ENCODE measurements at regions of chr6 and their contacts with region 1.

Region 1: DNA sequence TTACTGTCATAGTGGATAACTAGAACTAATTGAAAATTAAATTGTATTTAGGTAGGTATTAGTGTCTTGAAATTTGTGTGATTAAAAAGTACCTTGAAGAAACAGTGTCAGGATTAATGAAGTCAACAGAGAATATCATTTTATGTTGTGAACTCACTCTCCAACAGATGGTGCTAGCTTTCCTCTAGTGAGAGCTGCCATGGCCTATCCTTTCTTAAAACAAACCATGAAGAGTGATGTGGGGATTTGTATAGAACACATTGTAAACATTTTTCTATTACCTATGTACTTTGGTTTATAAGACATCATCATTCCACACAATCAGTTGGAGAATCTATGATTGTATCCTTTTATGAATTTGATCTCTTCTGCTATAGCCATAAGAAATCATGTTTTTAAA is 4.8 kb upstream of the SRSF12 start:
- DNase-seq: no peak
- H3K4me3 ChIP-seq: no peak overlapping the region
- H3K27ac ChIP-seq: no peak overlapping the region
- H3K4me1 ChIP-seq: peaks cover 0 to 12% (median 0%) of the 10 kb centered on the region in 3 donors
- H3K27me3 ChIP-seq: peaks cover 0 to 3% (median 0%) of the 10 kb centered on the region in 4 donors
- CTCF ChIP-seq: peak in 5 of 6 experiments; percentile 24 to 55 (median 26)
- POLR2A ChIP-seq: no peak

Region 2: DNA sequence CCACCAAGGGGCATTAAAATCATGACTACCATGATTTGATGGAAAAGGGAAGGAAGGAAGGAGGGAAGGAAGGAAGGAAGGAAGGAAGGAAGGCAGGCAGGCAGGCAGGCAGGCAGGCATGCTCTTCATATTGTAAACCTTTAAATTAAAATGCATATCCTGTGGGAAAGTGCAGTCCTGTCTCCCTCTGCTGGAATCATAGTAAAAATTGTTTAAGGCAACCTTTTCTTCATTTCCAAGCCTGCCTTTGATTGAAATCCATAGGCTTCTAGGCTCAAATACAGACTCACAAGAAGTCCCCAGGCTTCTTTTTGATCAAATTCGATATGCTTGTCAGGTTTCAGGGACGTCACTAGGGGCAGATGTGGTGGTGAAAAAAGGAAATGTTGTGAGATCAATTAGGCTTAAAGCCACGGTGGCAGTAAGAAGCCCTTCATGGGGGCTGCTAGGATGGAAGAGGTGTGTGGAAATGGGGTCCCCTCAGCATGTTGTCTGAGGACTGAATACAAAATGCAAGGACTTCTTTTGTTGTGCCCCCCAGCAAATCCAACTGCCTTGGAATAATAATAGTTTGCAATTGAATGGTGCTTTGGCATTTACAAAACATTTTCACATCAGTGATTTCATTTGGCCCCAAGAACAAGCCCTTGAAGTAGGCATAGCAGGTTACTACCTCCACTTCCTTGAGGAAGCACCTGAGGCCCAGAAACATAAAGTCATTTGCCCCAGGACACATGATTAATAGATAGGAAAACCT is 120.1 kb after region 1 on chr6:
- intact Hi-C with region 1: loop called (anchors 10 kb)
- DNase-seq: no peak
- H3K4me3 ChIP-seq: no peak overlapping the region
- H3K27ac ChIP-seq: no peak overlapping the region
- H3K4me1 ChIP-seq: peaks cover 0 to 9% (median 0%) of the 10 kb centered on the region in 3 donors
- H3K27me3 ChIP-seq: no peaks in the 10 kb centered on the region
- CTCF ChIP-seq: peak in 5 of 6 experiments; percentile 39 to 69 (median 53)
- POLR2A ChIP-seq: no peak

Region 3: GRCh38 chr6:89921691-89922090 is 799.1 kb after region 1 on chr6:
- intact Hi-C with region 1: no loop called
- DNase-seq: no peak
- H3K4me3 ChIP-seq: no peak overlapping the region
- H3K27ac ChIP-seq: no peak overlapping the region
- H3K4me1 ChIP-seq: no peaks in the 10 kb centered on the region
- H3K27me3 ChIP-seq: peaks cover 0 to 8% (median 0%) of the 10 kb centered on the region in 4 donors
- CTCF ChIP-seq: no peak
- POLR2A ChIP-seq: no peak

Measured in esophagus squamous epithelium (tissue), 5 donors.